Activated B cell treated with CpG ODN at 0.5 μM for 24 hours (primary cell): ENCODE measurements at regions of chr18 and their contacts with region 1.

Region 1: DNA sequence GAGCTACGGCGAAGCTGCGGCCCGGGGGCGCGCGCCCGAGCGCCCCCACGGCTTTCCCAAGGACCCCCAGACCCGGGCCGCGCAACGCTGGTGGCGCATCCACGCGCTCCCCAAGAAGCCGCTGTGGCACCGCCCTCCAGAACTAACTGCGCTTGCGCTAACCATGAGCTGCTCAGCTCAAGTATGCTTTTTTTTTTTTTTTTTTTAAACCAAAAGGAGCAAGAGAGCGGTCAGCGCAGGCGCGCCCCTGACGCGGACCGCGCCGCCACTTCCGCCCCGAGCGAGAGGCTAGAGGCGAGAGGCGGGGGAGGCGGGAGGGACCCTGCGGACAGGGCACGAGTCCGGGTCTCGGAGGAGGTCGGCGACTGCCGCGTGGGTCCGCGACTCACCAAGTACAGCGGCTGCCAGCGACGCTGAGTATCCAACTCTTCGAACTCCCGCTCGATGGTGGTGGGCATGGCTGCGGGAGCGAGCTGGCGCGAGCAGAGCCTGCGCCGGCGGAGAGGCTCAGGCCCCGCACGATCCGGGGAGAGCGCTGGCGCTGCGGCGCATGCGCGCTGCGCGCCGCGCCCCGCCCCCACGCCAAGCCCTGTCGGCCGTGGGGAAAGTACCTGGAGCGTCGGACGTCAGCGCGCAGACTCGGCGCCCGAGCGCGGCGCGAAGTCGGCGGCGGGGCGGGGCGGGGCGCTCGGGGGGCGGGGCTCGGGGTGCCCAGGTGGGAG is at the start of gene PTPN2:
- DNase-seq: peak; percentile 94
- ATAC-seq: peak; percentile 78
- H3K4me3 Mint-ChIP-seq: peak within 1 kb of the TSS; percentile 94
- H3K27ac Mint-ChIP-seq: peak within 1 kb of the TSS; percentile 93
- H3K4me1 Mint-ChIP-seq: peaks cover 72% of the 10 kb centered on the region
- H3K27me3 Mint-ChIP-seq: no peaks in the 10 kb centered on the region
- CTCF ChIP-seq: no peak
- total RNA-seq, gene PTPN2: 66.4 and 76.5 TPM in 2 replicates

Region 2: DNA sequence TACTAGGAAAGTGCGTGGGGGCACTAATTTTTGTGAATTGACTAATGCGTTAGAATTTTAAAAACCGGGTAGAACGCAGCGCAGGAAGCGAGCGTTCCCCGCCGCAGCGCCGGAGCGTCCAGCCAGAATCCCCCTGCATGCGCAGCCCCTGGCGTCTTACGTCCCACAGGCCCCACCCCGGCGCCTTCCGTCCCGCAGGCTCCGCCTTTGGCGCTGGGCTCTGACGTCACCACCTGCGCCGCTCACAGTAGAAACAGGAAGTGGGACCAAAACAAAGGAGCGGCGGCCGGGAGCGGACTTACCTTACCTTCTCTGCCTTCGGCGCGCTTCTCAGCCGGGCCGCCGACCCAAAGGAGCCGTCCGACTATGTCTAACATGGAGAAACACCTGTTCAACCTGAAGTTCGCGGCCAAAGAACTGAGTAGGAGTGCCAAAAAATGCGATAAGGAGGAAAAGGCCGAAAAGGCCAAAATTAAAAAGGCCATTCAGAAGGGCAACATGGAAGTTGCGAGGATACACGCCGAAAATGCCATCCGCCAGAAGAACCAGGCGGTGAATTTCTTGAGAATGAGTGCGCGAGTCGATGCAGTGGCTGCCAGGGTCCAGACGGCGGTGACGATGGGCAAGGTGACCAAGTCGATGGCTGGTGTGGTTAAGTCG is 1032.6 kb before region 1 on chr18 and contains the start of gene CHMP1B:
- CTCF ChIA-PET with region 1: no interaction called
- POLR2A ChIA-PET with region 1: no interaction called
- intact Hi-C with region 1: loop called (anchors 5 kb)
- DNase-seq: peak; percentile 98
- ATAC-seq: peak; percentile 94
- H3K4me3 Mint-ChIP-seq: peak within 1 kb of the TSS; percentile 100
- H3K27ac Mint-ChIP-seq: peak within 1 kb of the TSS; percentile 99
- H3K4me1 Mint-ChIP-seq: peaks cover 52% of the 10 kb centered on the region
- H3K27me3 Mint-ChIP-seq: no peaks in the 10 kb centered on the region
- CTCF ChIP-seq: no peak
- total RNA-seq, gene CHMP1B: 28.5 and 29.4 TPM in 2 replicates

Region 3: GRCh38 chr18:12702221-12703095 is 181.4 kb before region 1 on chr18 and contains the starts of genes CEP76 and PSMG2:
- CTCF ChIA-PET with region 1: no interaction called
- POLR2A ChIA-PET with region 1: interaction called, 28 read pairs
- intact Hi-C with region 1: loop called (anchors 1 kb)
- DNase-seq: peak; percentile 90
- ATAC-seq: peak; percentile 88
- H3K4me3 Mint-ChIP-seq: peak within 1 kb of the TSS; percentile 99
- H3K27ac Mint-ChIP-seq: peak within 1 kb of the TSS; percentile 99
- H3K4me1 Mint-ChIP-seq: peaks cover 38% of the 10 kb centered on the region
- H3K27me3 Mint-ChIP-seq: no peaks in the 10 kb centered on the region
- CTCF ChIP-seq: no peak
- total RNA-seq, gene CEP76: 6.4 and 6.9 TPM in 2 replicates
- total RNA-seq, gene PSMG2: 67.4 and 69.1 TPM in 2 replicates

Region 4: GRCh38 chr18:12862467-12862866 is 21.4 kb before region 1 on chr18:
- CTCF ChIA-PET with region 1: no interaction called
- POLR2A ChIA-PET with region 1: interaction called, 14 read pairs
- intact Hi-C with region 1: loop called (anchors 2 kb)
- DNase-seq: no peak
- ATAC-seq: no peak
- H3K4me3 Mint-ChIP-seq: no peak overlapping the region
- H3K27ac Mint-ChIP-seq: peak overlapping the region; percentile 53
- H3K4me1 Mint-ChIP-seq: peaks cover 66% of the 10 kb centered on the region
- H3K27me3 Mint-ChIP-seq: no peaks in the 10 kb centered on the region
- CTCF ChIP-seq: no peak

Region 5: DNA sequence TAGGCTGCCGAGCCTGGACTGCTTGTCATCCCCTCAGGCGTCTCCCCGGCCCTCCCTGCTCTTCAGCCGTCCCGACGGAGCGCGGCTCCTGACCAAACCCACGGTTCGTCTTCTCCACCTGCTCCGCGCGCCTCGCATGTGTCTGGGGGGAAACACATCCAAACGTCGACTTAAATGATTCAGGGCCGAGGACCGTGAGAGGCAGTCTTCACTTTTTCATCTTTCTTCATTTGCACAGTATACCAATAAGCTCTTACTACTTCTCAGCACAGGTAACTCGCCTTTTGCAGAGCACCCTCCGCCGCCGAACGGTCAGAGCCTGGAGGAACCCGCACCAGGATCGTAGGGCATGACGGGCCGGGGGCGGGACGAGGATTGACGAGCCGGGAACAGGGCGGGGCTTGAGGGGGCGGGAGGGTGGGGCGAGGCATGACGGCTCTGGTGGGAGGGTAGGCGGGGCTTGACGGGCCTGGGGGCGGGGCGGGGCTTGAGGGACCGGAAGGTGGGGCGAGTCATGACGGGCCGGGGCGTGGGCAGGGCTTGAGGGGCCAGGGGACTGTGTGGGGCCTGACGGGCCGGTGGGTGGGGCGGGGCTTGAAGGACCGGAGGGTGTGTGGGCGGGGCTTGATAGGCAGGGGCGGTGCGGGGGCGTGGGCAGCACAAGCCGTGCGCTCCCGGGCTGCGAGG is 63.7 kb after region 1 on chr18 and contains the start of gene SEH1L:
- CTCF ChIA-PET with region 1: interaction called, 4 read pairs
- POLR2A ChIA-PET with region 1: interaction called, 43 read pairs
- intact Hi-C with region 1: loop called (anchors 1 kb)
- DNase-seq: peak; percentile 96
- ATAC-seq: peak; percentile 90
- H3K4me3 Mint-ChIP-seq: peak within 1 kb of the TSS; percentile 96
- H3K27ac Mint-ChIP-seq: peak within 1 kb of the TSS; percentile 97
- H3K4me1 Mint-ChIP-seq: peaks cover 24% of the 10 kb centered on the region
- H3K27me3 Mint-ChIP-seq: no peaks in the 10 kb centered on the region
- CTCF ChIP-seq: no peak
- total RNA-seq, gene SEH1L: 67.0 and 79.3 TPM in 2 replicates

Region 6: GRCh38 chr18:13566941-13567746 is 683.3 kb after region 1 on chr18:
- CTCF ChIA-PET with region 1: no interaction called
- POLR2A ChIA-PET with region 1: interaction called, 10 read pairs
- intact Hi-C with region 1: loop called (anchors 5 kb)
- DNase-seq: peak; percentile 62
- ATAC-seq: peak; percentile 53
- H3K4me3 Mint-ChIP-seq: peak overlapping the region; percentile 81
- H3K27ac Mint-ChIP-seq: peak overlapping the region; percentile 99
- H3K4me1 Mint-ChIP-seq: peaks cover 83% of the 10 kb centered on the region
- H3K27me3 Mint-ChIP-seq: no peaks in the 10 kb centered on the region
- CTCF ChIP-seq: no peak